CD4-positive, alpha-beta T cell (primary cell): ENCODE measurements at regions of chr11 and their contacts with region 1.

Region 1: DNA sequence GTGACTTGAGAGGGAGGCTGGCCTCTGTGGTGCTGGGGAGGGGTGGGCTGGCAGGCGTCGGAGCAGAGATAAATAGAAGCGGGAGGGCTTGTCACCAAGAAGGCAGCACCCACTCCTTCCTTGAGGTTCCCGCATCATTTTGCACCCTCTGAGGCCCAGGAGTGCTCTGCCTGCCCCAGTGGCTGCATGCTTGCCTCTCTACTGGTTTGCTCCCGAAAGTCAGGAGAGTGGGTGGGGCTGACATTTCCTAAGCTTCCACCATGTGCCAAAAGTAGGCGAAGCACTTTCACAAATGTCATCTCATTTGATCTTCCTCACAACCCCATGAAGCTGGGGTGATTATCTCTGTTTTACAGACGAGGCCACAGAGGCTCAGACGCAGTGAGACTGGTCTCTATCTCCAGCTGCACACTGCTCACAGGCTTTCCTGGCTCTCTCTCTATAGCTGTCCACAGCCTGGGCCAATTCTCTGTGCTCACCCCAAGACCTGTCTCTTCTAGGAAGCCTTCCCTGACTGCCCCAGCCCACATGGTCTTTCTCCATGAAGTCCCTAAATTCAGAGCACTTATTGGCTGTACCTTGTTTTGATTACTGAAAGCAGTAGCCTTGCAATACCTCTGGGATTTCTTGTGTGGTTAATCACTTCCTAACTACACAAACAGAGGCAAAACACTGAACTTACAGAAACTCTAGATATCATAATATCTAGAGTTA is 2.6 kb upstream of the UCP3 start:
- DNase-seq: peak in 9 of 14 experiments; percentile 19 to 75 (median 38)
- ATAC-seq: peak; percentile 74
- H3K4me3 ChIP-seq: no peak overlapping the region
- H3K4me3 Mint-ChIP-seq: peak overlapping the region; percentile 34
- H3K27ac ChIP-seq: peak overlapping the region; percentile 55 to 58
- H3K27ac Mint-ChIP-seq: peak overlapping the region; percentile 92
- H3K4me1 ChIP-seq: peaks cover 100% of the 10 kb centered on the region
- H3K4me1 Mint-ChIP-seq: peaks cover 92% of the 10 kb centered on the region
- H3K27me3 ChIP-seq: no peaks in the 10 kb centered on the region
- H3K27me3 Mint-ChIP-seq: no peaks in the 10 kb centered on the region
- CTCF ChIP-seq: no peak

Region 2: DNA sequence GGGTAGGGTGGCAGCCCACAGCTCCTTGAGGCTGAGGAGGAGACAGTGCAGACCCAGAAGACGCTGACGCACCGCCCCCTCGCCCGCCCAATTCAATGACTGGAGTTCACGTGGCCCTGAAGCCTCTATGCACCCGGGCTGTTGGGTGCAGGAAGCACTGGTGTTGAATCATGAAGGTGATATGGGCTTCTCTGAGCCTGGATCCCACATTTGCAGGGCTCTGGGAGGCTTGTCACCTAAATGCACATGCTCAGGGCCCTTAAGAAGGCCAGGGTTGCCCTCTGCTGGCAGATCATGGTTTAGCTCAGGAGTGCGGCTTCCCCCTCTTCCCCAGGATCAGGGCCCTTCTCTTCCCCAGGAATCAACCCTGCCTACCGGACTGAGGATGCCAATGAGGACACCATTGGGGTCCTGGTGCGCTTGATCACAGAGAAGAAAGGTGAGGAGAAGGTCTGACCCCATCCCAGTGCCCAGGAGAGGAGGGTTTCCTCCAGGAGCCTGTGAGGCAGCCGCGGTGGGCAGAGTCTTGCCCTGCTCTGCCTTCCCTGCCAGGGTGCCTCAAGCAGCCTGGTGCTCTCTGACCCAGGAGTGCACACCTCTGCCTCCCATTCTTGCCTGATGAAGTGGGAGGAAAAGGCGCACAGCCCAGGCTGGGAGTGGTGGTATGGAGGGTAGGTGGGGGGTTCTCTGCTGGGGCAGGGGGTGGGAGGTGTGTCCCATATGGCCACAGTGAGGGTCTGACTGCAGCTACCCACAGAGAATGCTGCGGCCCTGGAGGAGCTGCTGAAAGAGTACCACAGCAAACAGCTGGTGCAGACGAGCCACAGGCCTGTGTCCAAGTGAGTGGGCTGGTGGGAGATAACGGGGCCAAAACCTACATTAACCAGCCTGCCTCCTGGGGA is 617.8 kb before region 1 on chr11:
- CTCF ChIA-PET with region 1: no interaction called
- POLR2A ChIA-PET with region 1: no interaction called
- intact Hi-C with region 1: no loop called
- DNase-seq: peak; percentile 52 to 81 (median 62)
- ATAC-seq: peak; percentile 77
- H3K4me3 ChIP-seq: no peak overlapping the region
- H3K4me3 Mint-ChIP-seq: peak overlapping the region; percentile 30
- H3K27ac ChIP-seq: no peak overlapping the region
- H3K27ac Mint-ChIP-seq: peak overlapping the region; percentile 73
- H3K4me1 ChIP-seq: peaks cover 7% of the 10 kb centered on the region
- H3K4me1 Mint-ChIP-seq: peaks cover 4% of the 10 kb centered on the region
- H3K27me3 ChIP-seq: no peaks in the 10 kb centered on the region
- H3K27me3 Mint-ChIP-seq: no peaks in the 10 kb centered on the region
- CTCF ChIP-seq: peak; percentile 77

Region 3: DNA sequence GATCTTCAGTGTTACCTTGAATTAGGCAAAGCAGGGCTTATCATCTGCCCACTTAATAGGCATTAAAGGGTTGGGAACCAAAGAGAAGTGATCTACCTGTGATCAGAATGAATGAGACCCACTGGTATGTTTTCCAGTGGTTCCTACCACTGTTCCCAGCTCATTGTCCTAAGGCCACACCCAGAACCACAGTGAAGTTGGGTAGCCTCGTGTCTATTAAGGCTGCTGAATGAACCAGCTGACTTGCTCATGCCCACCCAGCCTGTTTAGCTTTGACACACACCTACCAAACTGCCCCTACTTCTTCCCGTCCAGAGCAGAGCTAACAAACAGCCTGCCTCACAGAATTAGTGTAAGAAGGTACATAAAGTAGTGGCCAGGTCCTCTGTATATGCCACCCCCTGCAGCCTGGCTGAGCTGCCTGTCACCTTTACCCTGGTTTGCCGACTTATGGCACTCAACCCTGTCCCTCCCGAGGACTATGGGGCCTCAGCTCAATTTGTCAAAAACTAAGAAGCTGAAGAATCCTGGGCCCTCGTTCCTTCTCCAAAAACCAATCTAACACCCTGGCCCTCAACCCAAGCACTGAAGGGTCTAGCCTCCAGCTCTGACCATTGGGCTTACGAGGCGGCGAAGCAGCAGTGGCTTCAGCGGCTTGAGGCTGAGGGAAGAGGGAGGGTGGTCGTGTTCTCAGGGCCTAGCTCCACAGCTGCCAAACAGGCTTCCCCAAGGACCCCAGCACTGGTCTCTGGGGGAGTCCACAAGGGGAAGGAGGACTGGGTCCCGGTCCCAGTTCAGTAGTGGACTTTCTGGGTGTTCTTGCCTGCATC is 38.7 kb before region 1 on chr11:
- CTCF ChIA-PET with region 1: no interaction called
- POLR2A ChIA-PET with region 1: interaction called, 316 read pairs
- intact Hi-C with region 1: no loop called
- DNase-seq: peak in 1 of 14 experiments; percentile 36
- ATAC-seq: no peak
- H3K4me3 ChIP-seq: no peak overlapping the region
- H3K4me3 Mint-ChIP-seq: peak overlapping the region; percentile 56
- H3K27ac ChIP-seq: peak overlapping the region; percentile 56 to 72
- H3K27ac Mint-ChIP-seq: peak overlapping the region; percentile 98
- H3K4me1 ChIP-seq: peaks cover 100% of the 10 kb centered on the region
- H3K4me1 Mint-ChIP-seq: peaks cover 100% of the 10 kb centered on the region
- H3K27me3 ChIP-seq: no peaks in the 10 kb centered on the region
- H3K27me3 Mint-ChIP-seq: no peaks in the 10 kb centered on the region
- CTCF ChIP-seq: no peak

Region 4: DNA sequence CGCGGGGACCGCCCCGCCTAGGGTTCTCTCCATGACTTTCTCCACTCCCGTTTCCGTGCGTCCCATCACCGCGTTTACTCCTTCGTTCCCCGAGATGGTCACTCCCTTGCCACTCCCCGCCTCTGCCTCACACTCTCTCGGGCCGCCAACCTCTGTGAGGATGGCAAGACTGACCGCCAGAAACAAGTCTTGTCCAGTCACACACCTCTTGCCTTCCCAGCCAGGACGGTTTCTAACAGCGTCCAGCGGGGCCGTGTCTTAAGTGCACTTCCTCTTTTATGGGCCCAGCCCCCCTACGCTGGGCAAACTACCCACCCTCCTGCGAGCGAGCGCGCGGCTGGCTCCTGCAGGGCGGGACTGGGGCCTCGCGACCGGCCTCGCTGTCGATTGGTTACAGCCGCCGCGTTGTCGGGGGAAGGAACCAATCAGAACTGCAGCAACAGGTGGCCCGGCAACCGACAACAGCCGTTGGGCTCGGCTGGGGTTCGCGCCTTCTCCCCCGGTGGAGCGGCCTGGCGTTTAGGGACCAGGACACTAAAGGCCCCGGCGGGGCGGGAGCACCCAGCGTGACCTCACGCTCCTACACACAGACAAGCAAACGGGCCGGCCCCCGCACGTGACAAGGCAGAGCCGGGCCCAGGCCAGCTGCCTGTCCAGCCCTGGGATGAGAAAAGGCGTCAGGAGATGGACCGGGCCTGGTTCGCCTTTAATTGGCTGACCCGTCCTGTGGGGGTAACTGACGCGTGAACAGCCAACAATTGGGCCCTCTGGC is 28.4 kb before region 1 on chr11:
- CTCF ChIA-PET with region 1: interaction called, 10 read pairs
- POLR2A ChIA-PET with region 1: interaction called, 316 read pairs
- intact Hi-C with region 1: no loop called
- DNase-seq: peak; percentile 86 to 97 (median 90)
- ATAC-seq: peak; percentile 73
- H3K4me3 ChIP-seq: peak overlapping the region; percentile 87
- H3K4me3 Mint-ChIP-seq: peak overlapping the region; percentile 100
- H3K27ac ChIP-seq: peak overlapping the region; percentile 81 to 96
- H3K27ac Mint-ChIP-seq: peak overlapping the region; percentile 98
- H3K4me1 ChIP-seq: peaks cover 50% of the 10 kb centered on the region
- H3K4me1 Mint-ChIP-seq: peaks cover 57% of the 10 kb centered on the region
- H3K27me3 ChIP-seq: no peaks in the 10 kb centered on the region
- H3K27me3 Mint-ChIP-seq: no peaks in the 10 kb centered on the region
- CTCF ChIP-seq: no peak

Region 5: DNA sequence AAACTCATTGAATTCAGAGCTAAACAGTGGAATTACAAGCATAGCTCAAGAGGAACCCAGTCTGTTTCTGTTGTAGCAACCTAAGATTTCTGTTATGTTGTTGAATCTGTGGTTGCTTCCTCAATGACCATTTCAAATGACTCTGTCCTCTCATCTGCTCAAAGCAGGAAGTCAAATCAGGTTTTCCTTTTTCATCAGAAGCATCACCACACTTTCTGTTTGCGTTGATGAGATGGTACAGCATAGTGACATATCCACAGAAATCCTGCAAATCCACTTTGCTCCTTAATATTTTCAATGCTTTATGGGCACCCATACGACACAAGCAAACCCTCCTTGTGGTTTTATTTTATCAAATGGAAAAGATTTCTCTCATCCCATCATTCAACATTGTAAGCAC is 16.3 kb before region 1 on chr11:
- CTCF ChIA-PET with region 1: interaction called, 6 read pairs
- POLR2A ChIA-PET with region 1: interaction called, 72 read pairs
- intact Hi-C with region 1: loop called in 1 of 2 experiments (anchors 2 kb)
- DNase-seq: peak in 3 of 14 experiments; percentile 86 to 93 (median 89)
- ATAC-seq: peak; percentile 79
- H3K4me3 ChIP-seq: peak overlapping the region; percentile 35
- H3K4me3 Mint-ChIP-seq: peak overlapping the region; percentile 79
- H3K27ac ChIP-seq: peak overlapping the region; percentile 80 to 92
- H3K27ac Mint-ChIP-seq: peak overlapping the region; percentile 95
- H3K4me1 ChIP-seq: peaks cover 54% of the 10 kb centered on the region
- H3K4me1 Mint-ChIP-seq: peaks cover 76% of the 10 kb centered on the region
- H3K27me3 ChIP-seq: no peaks in the 10 kb centered on the region
- H3K27me3 Mint-ChIP-seq: no peaks in the 10 kb centered on the region
- CTCF ChIP-seq: no peak

Region 6: GRCh38 chr11:74030723-74031676 is 19.5 kb after region 1 on chr11:
- CTCF ChIA-PET with region 1: no interaction called
- POLR2A ChIA-PET with region 1: interaction called, 3 read pairs
- intact Hi-C with region 1: loop called in 1 of 2 experiments (anchors 2 kb)
- DNase-seq: peak in 1 of 14 experiments; percentile 41
- ATAC-seq: no peak
- H3K4me3 ChIP-seq: peak overlapping the region; percentile 2
- H3K4me3 Mint-ChIP-seq: peak overlapping the region; percentile 40
- H3K27ac ChIP-seq: peak overlapping the region in 1 of 2 donors; percentile 6
- H3K27ac Mint-ChIP-seq: peak overlapping the region; percentile 70
- H3K4me1 ChIP-seq: peaks cover 25% of the 10 kb centered on the region
- H3K4me1 Mint-ChIP-seq: peaks cover 21% of the 10 kb centered on the region
- H3K27me3 ChIP-seq: no peaks in the 10 kb centered on the region
- H3K27me3 Mint-ChIP-seq: no peaks in the 10 kb centered on the region
- CTCF ChIP-seq: no peak

Region 7: GRCh38 chr11:74072286-74072685 is 60.8 kb after region 1 on chr11:
- CTCF ChIA-PET with region 1: no interaction called
- POLR2A ChIA-PET with region 1: no interaction called
- intact Hi-C with region 1: no loop called
- DNase-seq: no peak
- ATAC-seq: no peak
- H3K4me3 ChIP-seq: no peak overlapping the region
- H3K4me3 Mint-ChIP-seq: no peak overlapping the region
- H3K27ac ChIP-seq: no peak overlapping the region
- H3K27ac Mint-ChIP-seq: no peak overlapping the region
- H3K4me1 ChIP-seq: no peaks in the 10 kb centered on the region
- H3K4me1 Mint-ChIP-seq: no peaks in the 10 kb centered on the region
- H3K27me3 ChIP-seq: no peaks in the 10 kb centered on the region
- H3K27me3 Mint-ChIP-seq: no peaks in the 10 kb centered on the region
- CTCF ChIP-seq: no peak